ENCODE measurements at regions of chr11 and their contacts with region 1.

Region 1: GRCh38 chr11:66282468-66283386 is 4.8 kb downstream of the CNIH2 start:
- DNase-seq: peak; percentile 100
- ATAC-seq: peak; percentile 89
- H3K4me3 Mint-ChIP-seq: peak overlapping the region; percentile 19
- H3K27ac Mint-ChIP-seq: peak overlapping the region; percentile 38
- H3K4me1 Mint-ChIP-seq: peaks cover 33% of the 10 kb centered on the region
- H3K27me3 Mint-ChIP-seq: peaks cover 1% of the 10 kb centered on the region
- CTCF ChIP-seq: peak; percentile 91

Region 2: DNA sequence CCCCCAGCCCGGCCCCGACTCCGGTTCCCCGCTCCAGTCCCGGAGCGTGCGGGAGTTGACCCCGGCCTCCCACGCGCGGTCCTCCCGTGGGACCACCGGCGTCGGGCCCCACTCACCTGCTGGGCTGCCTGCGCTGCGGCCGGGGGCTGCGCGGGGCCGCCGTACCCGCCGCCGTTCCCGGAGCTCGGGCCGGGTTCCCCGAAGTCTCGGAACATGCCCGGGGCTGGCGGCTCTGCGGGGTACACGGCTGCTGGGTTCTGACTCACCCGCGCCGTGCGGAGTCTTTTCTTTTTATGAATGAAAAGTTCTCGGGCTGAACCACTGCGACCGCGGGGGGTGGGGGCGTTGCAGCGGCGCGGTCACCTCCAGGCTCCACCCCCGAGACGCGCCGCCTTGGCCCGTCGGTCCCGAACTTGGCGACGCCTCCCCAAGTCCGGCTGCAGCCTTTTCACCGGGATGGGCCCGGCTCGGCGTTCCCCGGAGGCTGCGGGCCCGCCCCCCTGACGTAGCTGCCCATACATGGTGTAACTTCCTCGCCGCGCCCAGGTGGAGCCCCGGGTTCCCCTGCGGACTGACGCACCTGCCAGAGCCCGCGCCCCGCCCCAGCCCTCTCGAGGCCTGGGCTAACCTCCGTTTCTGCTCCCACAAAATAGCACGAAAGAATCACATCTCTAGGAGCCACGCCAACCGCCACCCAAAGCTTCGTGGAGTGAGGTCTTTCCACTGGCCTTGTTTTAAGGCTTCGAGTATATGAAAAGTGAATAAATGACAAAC is 382.4 kb before region 1 on chr11 and contains the start of gene FOSL1:
- CTCF ChIA-PET with region 1: no interaction called
- POLR2A ChIA-PET with region 1: no interaction called
- intact Hi-C with region 1: no loop called
- DNase-seq: peak; percentile 97
- ATAC-seq: peak; percentile 88
- H3K4me3 Mint-ChIP-seq: peak within 1 kb of the TSS; percentile 80
- H3K27ac Mint-ChIP-seq: peak within 1 kb of the TSS; percentile 86
- H3K4me1 Mint-ChIP-seq: peaks cover 32% of the 10 kb centered on the region
- H3K27me3 Mint-ChIP-seq: peaks cover 5% of the 10 kb centered on the region
- CTCF ChIP-seq: no peak
- total RNA-seq, gene FOSL1: 9.9 to 10.2 TPM

Region 3: DNA sequence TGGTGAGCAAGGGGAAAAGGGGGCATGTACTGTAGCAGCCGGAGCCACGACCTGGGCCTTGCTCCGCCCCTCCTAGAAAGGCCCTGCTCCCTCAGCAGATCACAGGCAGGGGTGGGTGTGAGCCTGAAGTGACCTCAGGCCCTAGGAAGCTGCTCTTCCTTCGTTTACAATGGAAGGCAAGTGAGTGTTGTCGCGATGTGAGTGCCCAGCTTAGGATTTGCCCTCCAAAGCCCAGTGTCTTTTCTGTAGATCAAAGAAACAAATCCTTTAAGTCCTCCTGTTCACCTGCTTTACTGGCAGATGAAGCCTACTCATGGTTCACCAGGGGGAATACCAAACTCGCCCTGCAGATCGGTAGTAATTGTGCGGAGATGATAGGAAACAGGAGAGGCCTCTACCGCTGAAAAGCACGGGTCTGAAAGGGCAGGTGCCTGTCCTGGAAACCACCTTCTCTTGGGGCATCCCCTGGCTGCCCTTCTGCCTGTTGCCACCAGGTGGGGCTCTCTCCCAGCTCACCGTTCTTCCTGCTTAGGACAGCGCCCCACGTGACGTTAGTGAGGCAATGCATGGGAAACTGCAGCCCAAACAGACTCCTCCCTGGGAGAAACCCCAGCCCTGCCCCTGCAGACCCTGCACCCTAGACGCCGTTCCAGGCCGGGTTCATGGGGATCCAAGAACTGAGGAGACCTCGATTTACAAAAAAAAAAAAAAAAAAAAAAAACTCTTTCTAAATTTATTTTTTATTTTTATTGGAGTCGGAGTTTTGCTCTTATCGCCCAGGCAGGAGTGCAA is 60.2 kb before region 1 on chr11:
- CTCF ChIA-PET with region 1: interaction called, 19 read pairs
- POLR2A ChIA-PET with region 1: interaction called, 3 read pairs
- intact Hi-C with region 1: loop called (anchors 5 kb)
- DNase-seq: peak; percentile 97
- ATAC-seq: peak; percentile 97
- H3K4me3 Mint-ChIP-seq: peak overlapping the region; percentile 20
- H3K27ac Mint-ChIP-seq: peak overlapping the region; percentile 97
- H3K4me1 Mint-ChIP-seq: peaks cover 20% of the 10 kb centered on the region
- H3K27me3 Mint-ChIP-seq: no peaks in the 10 kb centered on the region
- CTCF ChIP-seq: peak; percentile 99

Region 4: DNA sequence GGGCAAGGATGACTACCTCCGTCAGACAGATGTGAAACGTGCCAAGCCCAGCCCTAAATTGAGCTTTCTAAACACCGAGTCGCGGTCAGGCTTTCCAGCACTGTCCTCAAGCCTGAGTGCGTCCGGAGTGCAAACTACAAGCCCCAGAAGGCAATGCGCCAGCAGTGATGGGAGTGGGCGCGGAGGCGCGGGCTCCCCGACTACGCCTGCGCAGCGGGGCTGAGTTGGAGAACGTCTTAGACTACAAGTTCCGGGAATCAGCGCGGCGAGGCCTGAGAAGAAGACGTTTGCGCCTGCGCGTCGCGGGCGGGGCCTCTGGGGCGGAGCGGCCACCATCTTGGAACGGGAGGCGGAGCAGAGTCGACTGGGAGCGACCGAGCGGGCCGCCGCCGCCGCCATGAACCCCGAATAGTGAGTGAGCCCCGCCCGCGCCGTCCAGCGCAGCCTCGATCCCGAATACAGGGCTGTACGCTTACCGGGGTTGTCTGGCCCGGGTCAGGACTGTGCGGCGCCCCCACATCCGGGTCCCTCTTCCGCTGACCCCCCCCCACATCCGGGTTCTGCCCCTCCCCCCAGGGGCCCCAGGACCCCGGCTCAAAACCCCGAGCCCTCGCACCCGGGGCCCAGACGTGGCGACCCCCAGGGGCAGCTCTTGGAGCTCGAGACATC is 14.3 kb before region 1 on chr11 and contains the start of gene RAB1B:
- CTCF ChIA-PET with region 1: interaction called, 37 read pairs
- POLR2A ChIA-PET with region 1: interaction called, 76 read pairs
- intact Hi-C with region 1: no loop called
- DNase-seq: peak; percentile 100
- ATAC-seq: peak; percentile 87
- H3K4me3 Mint-ChIP-seq: peak within 1 kb of the TSS; percentile 91
- H3K27ac Mint-ChIP-seq: peak within 1 kb of the TSS; percentile 98
- H3K4me1 Mint-ChIP-seq: peaks cover 29% of the 10 kb centered on the region
- H3K27me3 Mint-ChIP-seq: no peaks in the 10 kb centered on the region
- CTCF ChIP-seq: no peak
- total RNA-seq, gene RAB1B: 97.9 to 98.2 TPM

Region 5: DNA sequence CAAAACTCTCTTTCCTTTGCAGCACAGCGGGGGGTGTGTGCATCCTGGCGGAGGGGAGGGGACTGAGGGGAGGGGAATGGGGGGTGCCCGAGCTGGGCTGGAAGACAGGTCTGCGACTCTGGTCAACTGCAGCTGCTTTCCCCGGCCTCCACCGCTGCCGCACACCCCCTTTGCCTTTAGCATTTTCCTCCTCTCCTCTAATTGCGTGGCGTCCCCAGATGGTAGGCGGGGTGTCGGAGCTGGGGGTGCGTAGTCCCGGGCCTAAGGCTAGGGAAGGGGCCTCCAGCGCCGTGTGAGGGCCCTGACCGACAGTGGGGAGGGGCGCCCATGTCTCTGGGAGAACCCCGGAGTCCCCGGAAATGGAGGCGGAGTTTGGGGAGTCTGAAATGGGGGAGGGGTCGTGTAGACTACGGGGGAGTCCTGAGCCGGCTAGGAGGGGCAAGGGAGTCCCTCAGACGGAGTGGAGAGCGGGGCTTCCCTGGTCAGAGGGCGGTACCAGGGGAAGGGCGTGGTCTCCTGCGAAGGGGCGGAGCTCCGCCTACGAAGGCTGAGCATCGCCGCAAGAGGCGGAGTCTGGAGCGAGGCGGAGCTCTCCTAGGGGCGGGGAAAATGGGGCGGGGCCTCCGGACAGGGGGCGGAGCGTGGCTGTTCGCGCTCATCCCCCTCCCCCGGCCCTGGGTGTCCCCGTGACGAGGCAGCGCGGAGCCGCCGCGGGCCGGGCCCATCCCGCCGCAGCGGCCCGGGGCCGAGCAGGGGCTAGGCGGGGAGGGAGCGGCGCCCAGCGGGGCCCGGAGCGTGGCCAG is 183.7 kb after region 1 on chr11 and contains the start of gene PELI3:
- CTCF ChIA-PET with region 1: no interaction called
- POLR2A ChIA-PET with region 1: no interaction called
- intact Hi-C with region 1: no loop called
- DNase-seq: peak; percentile 94
- ATAC-seq: peak; percentile 92
- H3K4me3 Mint-ChIP-seq: peak within 1 kb of the TSS; percentile 86
- H3K27ac Mint-ChIP-seq: peak within 1 kb of the TSS; percentile 81
- H3K4me1 Mint-ChIP-seq: peaks cover 40% of the 10 kb centered on the region
- H3K27me3 Mint-ChIP-seq: no peaks in the 10 kb centered on the region
- CTCF ChIP-seq: no peak
- total RNA-seq, gene PELI3: 6.7 to 10.5 TPM

Region 6: DNA sequence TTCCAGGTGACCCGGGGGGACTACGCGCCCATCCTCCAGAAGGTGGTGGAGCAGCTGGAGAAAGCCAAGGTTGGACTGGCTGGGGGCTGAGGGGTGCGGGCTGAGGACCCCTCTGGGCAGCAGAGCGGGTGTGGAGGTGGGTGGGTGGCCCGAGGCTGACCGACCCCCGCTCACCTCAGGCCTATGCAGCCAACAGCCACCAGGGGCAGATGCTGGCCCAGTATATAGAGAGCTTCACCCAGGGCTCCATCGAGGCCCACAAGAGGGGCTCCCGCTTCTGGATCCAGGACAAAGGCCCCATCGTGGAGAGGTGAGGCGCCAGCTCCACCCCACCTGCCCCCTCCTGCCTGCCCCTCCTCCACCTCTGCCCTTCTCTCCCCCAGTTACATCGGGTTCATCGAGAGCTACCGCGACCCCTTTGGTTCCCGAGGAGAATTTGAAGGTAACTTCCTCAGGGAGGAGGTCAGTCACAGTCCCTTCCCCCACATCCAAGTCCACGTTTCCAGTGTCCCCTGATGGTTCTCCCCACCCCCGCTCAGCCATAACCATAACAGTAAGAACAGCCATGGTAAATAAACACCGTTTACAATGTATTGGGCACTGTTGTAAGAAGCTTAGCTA is 208.7 kb after region 1 on chr11:
- CTCF ChIA-PET with region 1: no interaction called
- POLR2A ChIA-PET with region 1: no interaction called
- intact Hi-C with region 1: no loop called
- DNase-seq: no peak
- ATAC-seq: peak; percentile 55
- H3K4me3 Mint-ChIP-seq: no peak overlapping the region
- H3K27ac Mint-ChIP-seq: no peak overlapping the region
- H3K4me1 Mint-ChIP-seq: no peaks in the 10 kb centered on the region
- H3K27me3 Mint-ChIP-seq: no peaks in the 10 kb centered on the region
- CTCF ChIP-seq: peak; percentile 32